K562 (cell line): ENCODE measurements at regions of chr5 and their contacts with region 1.

Region 1: DNA sequence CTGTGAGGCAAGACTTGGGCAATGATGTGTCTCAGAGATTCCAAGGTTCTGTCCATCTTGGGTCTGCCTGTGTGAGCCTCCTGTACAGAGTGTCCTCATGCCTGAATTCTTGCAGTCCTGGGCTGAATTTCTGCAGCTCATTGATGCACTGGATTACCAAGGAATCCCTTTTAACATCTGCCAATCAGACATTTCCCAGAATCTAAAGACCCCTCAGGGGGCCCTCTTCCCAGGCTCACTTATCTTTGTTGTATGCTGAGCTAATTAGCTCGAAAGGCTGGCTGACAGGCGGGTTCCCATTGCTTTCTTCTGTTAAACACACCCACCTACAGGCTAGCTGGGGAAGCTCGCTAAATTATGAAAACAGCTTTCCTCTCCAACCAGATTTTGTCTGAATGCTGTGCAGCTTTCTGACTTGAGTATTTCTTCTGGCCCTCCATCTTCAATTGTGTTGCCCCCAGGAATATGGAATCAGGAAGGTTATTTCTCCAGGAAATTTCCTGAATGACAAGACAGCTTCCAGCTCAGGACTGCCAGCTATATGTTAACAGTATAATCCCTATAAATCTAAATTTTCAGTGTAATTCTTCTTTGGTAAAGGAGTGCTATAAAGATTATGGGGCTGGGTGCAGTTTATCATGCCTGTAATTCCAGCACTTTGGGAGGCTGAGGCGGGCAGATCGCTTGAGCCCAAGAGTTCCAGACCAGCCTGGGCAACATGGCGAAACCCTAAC is at the start of gene LIX1:
- DNase-seq: peak in 2 of 4 experiments; percentile 35 to 54
- ATAC-seq: peak; percentile 95
- H3K4me3 ChIP-seq: no peak within 1 kb of the TSS
- H3K27ac ChIP-seq: no peak within 1 kb of the TSS
- H3K4me1 ChIP-seq: no peaks in the 10 kb centered on the region
- H3K27me3 ChIP-seq: no peaks in the 10 kb centered on the region
- CTCF ChIP-seq: peak; percentile 56 to 78 (median 63)
- EP300 ChIP-seq: no peak
- POLR2A ChIP-seq: no peak
- RAD21 ChIP-seq: peak; percentile 78
- polyA plus RNA-seq, gene LIX1: 0.01 to 0.18 TPM

Region 2: DNA sequence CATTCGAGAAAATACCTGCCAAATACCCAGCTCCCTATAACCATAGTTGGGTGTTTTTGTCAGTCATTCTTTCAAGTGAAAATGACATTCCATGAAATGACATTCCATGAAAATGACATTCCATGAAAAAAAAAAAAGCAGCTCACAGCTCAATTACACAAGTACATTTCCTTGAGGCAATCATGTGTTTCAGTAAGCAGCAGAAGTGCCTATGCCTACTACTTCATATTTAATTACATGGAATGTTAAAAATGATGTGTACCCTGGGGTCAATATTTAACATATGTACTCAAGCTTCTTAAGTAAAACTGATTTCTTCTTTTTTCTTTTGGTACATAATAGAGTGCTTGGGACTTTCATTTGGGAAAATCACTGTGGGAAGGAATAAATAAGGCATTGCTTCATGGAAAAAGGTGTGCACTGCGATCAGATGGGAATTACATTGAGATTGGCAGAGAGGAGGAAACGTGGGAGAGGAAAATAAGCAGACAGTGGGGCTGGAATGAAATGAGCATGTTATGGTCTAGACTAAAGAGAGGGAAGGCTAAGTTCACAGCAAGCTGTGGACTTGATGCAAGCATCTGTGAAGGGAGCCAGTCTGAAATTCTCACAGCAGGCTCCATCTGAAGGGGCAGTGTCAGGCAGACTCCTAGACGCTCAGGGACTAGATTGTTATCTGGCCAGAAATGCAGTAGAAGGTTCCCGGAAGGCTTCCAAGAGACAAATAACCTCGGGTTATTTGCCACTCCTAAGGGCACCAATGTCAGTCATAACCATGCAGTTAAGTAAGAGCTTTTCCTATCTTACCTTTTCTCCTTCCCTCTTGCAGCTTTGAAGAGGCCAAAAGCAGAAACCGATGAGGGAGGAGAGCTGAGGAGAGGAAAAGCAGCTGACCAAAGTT is 1444.7 kb before region 1 on chr5:
- CTCF ChIA-PET with region 1: no interaction called
- POLR2A ChIA-PET with region 1: no interaction called
- in situ Hi-C with region 1: no loop called
- intact Hi-C with region 1: no loop called
- DNase-seq: peak in 2 of 4 experiments; percentile 63 to 72
- ATAC-seq: peak; percentile 87
- H3K4me3 ChIP-seq: no peak overlapping the region
- H3K27ac ChIP-seq: peak overlapping the region; percentile 41; the same call in 1 of the 3 replicates
- H3K4me1 ChIP-seq: peaks cover 3 to 20% of the 10 kb centered on the region in 2 experiments; a peak in 3 of 5 replicates
- H3K27me3 ChIP-seq: no peaks in the 10 kb centered on the region
- CTCF ChIP-seq: no peak
- EP300 ChIP-seq: peak; percentile 18; the same call in 1 of the 2 replicates
- POLR2A ChIP-seq: no peak
- RAD21 ChIP-seq: no peak

Region 3: GRCh38 chr5:96997265-96997859 is 145.3 kb before region 1 on chr5:
- CTCF ChIA-PET with region 1: interaction called, 5 read pairs
- POLR2A ChIA-PET with region 1: no interaction called
- in situ Hi-C with region 1: no loop called
- intact Hi-C with region 1: loop called (anchors 1 kb)
- DNase-seq: peak; percentile 13 to 56 (median 22)
- ATAC-seq: peak; percentile 82
- H3K4me3 ChIP-seq: no peak overlapping the region
- H3K27ac ChIP-seq: no peak overlapping the region
- H3K4me1 ChIP-seq: no peaks in the 10 kb centered on the region
- H3K27me3 ChIP-seq: no peaks in the 10 kb centered on the region
- CTCF ChIP-seq: peak in 2 of 3 experiments; percentile 31 to 60; a peak in 3 of 6 replicates
- EP300 ChIP-seq: no peak
- POLR2A ChIP-seq: no peak
- RAD21 ChIP-seq: peak; percentile 57 to 73

Region 4: GRCh38 chr5:97062046-97062445 is 80.6 kb before region 1 on chr5:
- CTCF ChIA-PET with region 1: interaction called, 3 read pairs
- POLR2A ChIA-PET with region 1: no interaction called
- in situ Hi-C with region 1: no loop called
- intact Hi-C with region 1: loop called (anchors 5 kb)
- DNase-seq: no peak
- ATAC-seq: no peak
- H3K4me3 ChIP-seq: no peak overlapping the region
- H3K27ac ChIP-seq: no peak overlapping the region
- H3K4me1 ChIP-seq: no peaks in the 10 kb centered on the region
- H3K27me3 ChIP-seq: no peaks in the 10 kb centered on the region; a peak in 1 of 5 replicates
- CTCF ChIP-seq: no peak
- EP300 ChIP-seq: no peak
- POLR2A ChIP-seq: no peak
- RAD21 ChIP-seq: no peak

Region 5: DNA sequence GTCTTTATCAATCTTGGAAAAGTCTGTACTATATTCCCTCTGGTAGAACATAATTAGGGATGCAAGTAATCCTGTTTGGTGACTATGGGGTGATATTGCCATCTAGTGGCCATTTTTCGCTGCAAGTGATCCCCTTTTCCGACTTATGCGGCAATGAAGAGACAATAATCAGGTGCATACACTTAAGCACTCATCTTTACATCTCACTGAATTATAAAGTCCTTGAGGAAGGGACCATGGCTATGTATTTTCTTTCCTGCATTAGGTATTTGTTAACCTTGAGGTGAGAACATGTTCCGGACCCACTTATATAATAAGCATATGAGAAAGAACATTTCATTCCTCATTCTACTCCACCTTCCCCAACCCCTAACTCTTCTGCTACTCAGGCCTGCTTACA is 19.4 kb after region 1 on chr5:
- CTCF ChIA-PET with region 1: no interaction called
- POLR2A ChIA-PET with region 1: no interaction called
- in situ Hi-C with region 1: no loop called
- intact Hi-C with region 1: no loop called
- DNase-seq: peak; percentile 37 to 79 (median 44)
- ATAC-seq: peak; percentile 91
- H3K4me3 ChIP-seq: no peak overlapping the region
- H3K27ac ChIP-seq: no peak overlapping the region
- H3K4me1 ChIP-seq: no peaks in the 10 kb centered on the region
- H3K27me3 ChIP-seq: no peaks in the 10 kb centered on the region
- CTCF ChIP-seq: peak; percentile 75 to 87 (median 77)
- EP300 ChIP-seq: no peak
- POLR2A ChIP-seq: no peak
- RAD21 ChIP-seq: peak; percentile 85 to 91